Vagina (tissue), 2 donors: ENCODE measurements at regions of chr19 and their contacts with region 1.

Region 1: GRCh38 chr19:46480415-46480814 is 9.1 kb upstream of the PNMA8A start:
- DNase-seq: no peak
- H3K4me3 ChIP-seq: no peak overlapping the region
- H3K27ac ChIP-seq: peak overlapping the region; percentile 68
- H3K4me1 ChIP-seq: peaks cover 5% of the 10 kb centered on the region
- H3K27me3 ChIP-seq: no peaks in the 10 kb centered on the region
- CTCF ChIP-seq: no peak
- POLR2A ChIP-seq: no peak

Region 2: GRCh38 chr19:46411925-46412649 is 68.3 kb before region 1 on chr19:
- intact Hi-C with region 1: loop called (anchors 1 kb)
- DNase-seq: no peak
- H3K4me3 ChIP-seq: peak overlapping the region; percentile 54 to 58
- H3K27ac ChIP-seq: peak overlapping the region; percentile 79
- H3K4me1 ChIP-seq: peaks cover 72% of the 10 kb centered on the region
- H3K27me3 ChIP-seq: no peaks in the 10 kb centered on the region
- CTCF ChIP-seq: no peak
- POLR2A ChIP-seq: no peak

Region 3: GRCh38 chr19:46678110-46678732 is 197.8 kb after region 1 on chr19:
- intact Hi-C with region 1: loop called (anchors 5 kb)
- DNase-seq: no peak
- H3K4me3 ChIP-seq: no peak overlapping the region
- H3K27ac ChIP-seq: no peak overlapping the region
- H3K4me1 ChIP-seq: no peaks in the 10 kb centered on the region
- H3K27me3 ChIP-seq: no peaks in the 10 kb centered on the region
- CTCF ChIP-seq: no peak
- POLR2A ChIP-seq: no peak